ENCODE measurements at regions of chr11 and their contacts with region 1.

Region 1: DNA sequence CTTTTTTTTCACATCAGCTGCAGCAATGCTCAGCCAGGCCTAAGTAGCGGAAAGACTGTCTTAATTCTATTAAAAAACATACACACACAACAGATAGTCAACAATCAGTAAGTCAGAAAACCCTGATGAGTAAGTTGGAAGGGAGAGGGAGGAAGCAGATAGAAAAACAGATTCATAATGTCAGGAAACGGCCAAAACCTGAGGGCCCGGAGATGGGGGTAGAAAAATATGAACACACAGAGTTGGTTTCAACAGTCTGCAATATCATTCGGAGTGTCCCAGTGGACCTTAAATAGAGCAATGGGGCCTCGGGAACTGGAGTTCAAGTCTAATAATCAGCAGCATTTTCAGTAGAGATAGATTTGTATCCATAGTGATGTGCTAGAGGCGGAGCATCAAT is 14.8 kb downstream of the LRRC55 start:
- DNase-seq: no peak
- ATAC-seq: no peak
- H3K4me3 ChIP-seq: no peak overlapping the region
- H3K27ac ChIP-seq: peak overlapping the region in 7 of 12 donors; percentile 5 to 61 (median 46)
- H3K4me1 ChIP-seq: peaks cover 4 to 78% (median 36%) of the 10 kb centered on the region in 12 donors
- H3K27me3 ChIP-seq: no peaks in the 10 kb centered on the region
- CTCF ChIP-seq: no peak
- POLR2A ChIP-seq: no peak

Region 2: GRCh38 chr11:57094181-57094935 is 102.2 kb before region 1 on chr11:
- intact Hi-C with region 1: no loop called
- DNase-seq: no peak
- ATAC-seq: no peak
- H3K4me3 ChIP-seq: no peak overlapping the region
- H3K27ac ChIP-seq: no peak overlapping the region
- H3K4me1 ChIP-seq: peaks cover 0 to 11% (median 0%) of the 10 kb centered on the region in 12 donors
- H3K27me3 ChIP-seq: no peaks in the 10 kb centered on the region
- CTCF ChIP-seq: no peak
- POLR2A ChIP-seq: no peak

Region 3: DNA sequence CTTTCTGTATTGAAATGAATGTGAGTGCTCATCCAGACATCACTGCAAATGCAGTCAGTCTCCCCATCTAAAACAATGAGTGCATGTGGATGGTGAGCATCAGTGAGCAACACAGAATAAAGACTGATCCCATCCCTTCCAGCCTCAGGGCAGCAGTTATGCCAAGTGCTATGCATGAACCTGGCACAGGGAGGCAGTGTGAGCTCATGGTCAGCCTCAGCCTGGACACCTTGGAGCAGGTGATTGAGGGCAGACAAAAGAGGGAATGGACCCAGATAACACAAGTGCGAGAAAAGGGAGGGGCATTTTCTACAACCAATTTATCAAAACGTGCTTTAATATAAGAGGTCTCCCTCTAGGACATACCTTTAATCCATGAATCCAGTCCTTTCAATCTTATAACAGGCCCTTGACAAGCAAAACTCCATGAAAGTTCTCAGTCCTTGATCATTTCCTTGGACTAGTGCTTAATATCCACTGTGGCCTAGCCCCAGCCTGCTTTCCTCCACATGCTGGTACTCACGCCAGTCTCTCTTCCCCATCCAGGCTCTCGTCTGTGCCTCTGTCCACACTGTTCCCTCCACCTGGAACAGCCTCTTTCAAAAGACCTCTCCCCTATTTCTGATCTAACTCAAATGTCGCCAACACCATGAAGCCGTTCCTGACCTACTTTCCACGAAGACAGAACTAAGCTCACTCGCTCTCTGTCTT is 65.4 kb before region 1 on chr11:
- intact Hi-C with region 1: loop called in 3 of 10 experiments (anchors 10 kb)
- DNase-seq: peak in 3 of 5 donors; percentile 29 to 35 (median 33)
- ATAC-seq: peak in 3 of 4 donors; percentile 69 to 73 (median 72)
- H3K4me3 ChIP-seq: no peak overlapping the region
- H3K27ac ChIP-seq: no peak overlapping the region
- H3K4me1 ChIP-seq: peaks cover 0 to 5% (median 0%) of the 10 kb centered on the region in 12 donors
- H3K27me3 ChIP-seq: peaks cover 0 to 3% (median 0%) of the 10 kb centered on the region in 9 donors
- CTCF ChIP-seq: peak; percentile 30 to 75 (median 64)
- POLR2A ChIP-seq: no peak

Region 4: GRCh38 chr11:57237204-57237681 is 40.6 kb after region 1 on chr11 and contains the start of gene APLNR:
- intact Hi-C with region 1: loop called in 5 of 10 experiments (anchors 5 kb)
- DNase-seq: no peak
- ATAC-seq: peak in 3 of 4 donors; percentile 44 to 74 (median 55)
- H3K4me3 ChIP-seq: peak within 1 kb of the TSS; percentile 14 to 74 (median 49)
- H3K27ac ChIP-seq: peak within 1 kb of the TSS; percentile 15 to 80 (median 65)
- H3K4me1 ChIP-seq: peaks cover 0 to 47% (median 14%) of the 10 kb centered on the region in 12 donors
- H3K27me3 ChIP-seq: peaks cover 0 to 36% (median 0%) of the 10 kb centered on the region in 9 donors
- CTCF ChIP-seq: no peak
- POLR2A ChIP-seq: no peak
- total RNA-seq, gene APLNR: 5.7 to 63.3 (median 9.9) TPM

Region 5: GRCh38 chr11:57456960-57457642 is 260.5 kb after region 1 on chr11:
- intact Hi-C with region 1: no loop called
- DNase-seq: peak; percentile 87 to 95 (median 89)
- ATAC-seq: peak; percentile 57 to 89 (median 86)
- H3K4me3 ChIP-seq: peak overlapping the region in 2 of 12 donors; percentile 4 to 19
- H3K27ac ChIP-seq: no peak overlapping the region
- H3K4me1 ChIP-seq: peaks cover 3 to 43% (median 25%) of the 10 kb centered on the region in 12 donors
- H3K27me3 ChIP-seq: peaks cover 9 to 47% (median 32%) of the 10 kb centered on the region in 9 donors
- CTCF ChIP-seq: peak; percentile 98 to 100 (median 98)
- POLR2A ChIP-seq: no peak

Region 6: DNA sequence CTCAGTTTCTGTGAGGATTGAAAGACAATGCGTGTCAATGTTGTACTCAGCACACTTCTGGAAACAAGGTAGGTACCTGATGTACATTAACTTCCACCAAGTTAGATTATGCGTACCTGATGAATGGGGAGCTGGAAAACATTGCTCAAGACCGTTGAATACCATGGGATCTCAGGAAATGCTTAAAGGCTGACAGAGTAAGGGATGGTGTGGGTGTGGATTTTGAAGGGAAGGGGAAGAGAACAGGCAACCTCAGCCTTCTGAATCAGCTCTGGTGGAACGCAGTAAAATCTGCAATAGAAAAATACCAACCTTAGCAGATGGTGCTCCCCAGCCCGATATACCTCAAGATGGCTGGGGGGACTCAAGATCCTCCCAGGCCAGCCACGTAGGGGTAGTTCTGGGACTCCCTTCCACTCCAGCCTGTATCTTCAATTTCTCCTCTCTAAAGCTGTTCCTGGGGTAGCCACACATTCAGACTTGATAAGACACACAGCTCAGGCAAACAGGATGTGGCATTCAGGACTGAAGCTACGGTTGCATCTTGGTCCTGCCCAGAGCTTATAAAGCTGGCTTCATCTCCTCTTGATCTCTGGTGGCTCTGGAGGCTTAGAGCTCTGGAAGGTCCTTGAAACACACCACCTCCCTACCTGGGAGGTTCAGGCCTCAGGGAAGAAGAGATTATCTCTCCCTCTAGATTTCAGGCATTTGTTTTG is 676.8 kb after region 1 on chr11:
- intact Hi-C with region 1: no loop called
- DNase-seq: no peak
- ATAC-seq: no peak
- H3K4me3 ChIP-seq: no peak overlapping the region
- H3K27ac ChIP-seq: no peak overlapping the region
- H3K4me1 ChIP-seq: no peaks in the 10 kb centered on the region
- H3K27me3 ChIP-seq: no peaks in the 10 kb centered on the region
- CTCF ChIP-seq: no peak
- POLR2A ChIP-seq: no peak